Aorta (tissue), 5 donors: ENCODE measurements at regions of chr12 and their contacts with region 1.

Region 1: GRCh38 chr12:107131832-107132616 is 38.7 kb upstream of the CRY1 start:
- DNase-seq: no peak
- ATAC-seq: no peak
- H3K4me3 ChIP-seq: no peak overlapping the region
- H3K27ac ChIP-seq: no peak overlapping the region
- H3K4me1 ChIP-seq: no peaks in the 10 kb centered on the region
- H3K27me3 ChIP-seq: no peaks in the 10 kb centered on the region

Region 2: GRCh38 chr12:107066691-107067090 is 65.3 kb before region 1 on chr12:
- intact Hi-C with region 1: no loop called
- DNase-seq: no peak
- ATAC-seq: no peak
- H3K4me3 ChIP-seq: no peak overlapping the region
- H3K27ac ChIP-seq: no peak overlapping the region
- H3K4me1 ChIP-seq: no peaks in the 10 kb centered on the region
- H3K27me3 ChIP-seq: no peaks in the 10 kb centered on the region

Region 3: DNA sequence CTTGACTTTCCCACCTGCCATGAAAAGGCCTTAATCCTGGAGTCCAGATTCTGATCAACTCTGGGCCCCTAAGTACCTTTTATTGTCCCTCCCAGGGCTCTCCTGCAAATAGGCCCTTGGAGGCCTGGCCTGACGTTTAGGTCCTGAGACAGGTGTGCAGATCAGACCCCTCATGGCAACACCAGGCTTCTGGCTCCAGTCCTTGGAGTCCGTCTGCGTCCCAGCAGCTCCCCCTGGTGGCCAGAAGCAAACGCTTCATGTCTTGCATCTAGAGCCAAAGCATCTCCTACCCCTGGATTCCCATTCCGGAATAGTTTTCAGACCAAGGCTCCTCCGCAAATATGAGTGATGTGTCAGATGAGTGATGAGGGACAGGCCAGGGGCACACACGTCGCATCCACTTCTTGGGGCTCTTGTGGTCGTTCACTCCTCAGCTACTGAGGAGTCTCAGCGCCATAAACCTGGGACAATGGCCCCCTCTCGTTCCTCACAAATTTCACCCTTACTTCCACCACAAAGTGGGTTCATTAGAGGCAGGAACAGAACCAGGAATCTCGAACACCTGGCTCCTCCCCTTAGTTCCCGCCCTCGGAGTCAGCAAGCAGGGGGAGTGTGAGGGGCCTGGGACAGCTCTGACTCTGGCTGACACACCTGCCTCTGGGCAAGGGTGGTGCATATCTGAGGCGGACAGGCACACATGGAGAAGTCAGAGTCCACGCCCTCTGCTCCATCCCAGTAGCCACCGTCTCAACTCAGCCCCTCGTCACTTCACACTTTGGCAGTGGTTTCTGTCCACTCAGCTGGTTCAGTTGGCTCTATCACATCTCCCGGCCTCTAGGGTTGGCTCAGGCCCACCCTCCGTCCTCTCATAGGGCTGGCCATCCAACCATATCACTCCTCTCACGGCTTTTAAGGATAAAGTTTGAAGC is 475.7 kb after region 1 on chr12:
- intact Hi-C with region 1: loop called (anchors 1 to 5 kb)
- DNase-seq: peak; percentile 82 to 90
- ATAC-seq: peak; percentile 75
- H3K4me3 ChIP-seq: no peak overlapping the region
- H3K27ac ChIP-seq: no peak overlapping the region
- H3K4me1 ChIP-seq: no peaks in the 10 kb centered on the region
- H3K27me3 ChIP-seq: no peaks in the 10 kb centered on the region